KBM-7 (cell line): ENCODE measurements at regions of chr16 and their contacts with region 1.

Region 1: DNA sequence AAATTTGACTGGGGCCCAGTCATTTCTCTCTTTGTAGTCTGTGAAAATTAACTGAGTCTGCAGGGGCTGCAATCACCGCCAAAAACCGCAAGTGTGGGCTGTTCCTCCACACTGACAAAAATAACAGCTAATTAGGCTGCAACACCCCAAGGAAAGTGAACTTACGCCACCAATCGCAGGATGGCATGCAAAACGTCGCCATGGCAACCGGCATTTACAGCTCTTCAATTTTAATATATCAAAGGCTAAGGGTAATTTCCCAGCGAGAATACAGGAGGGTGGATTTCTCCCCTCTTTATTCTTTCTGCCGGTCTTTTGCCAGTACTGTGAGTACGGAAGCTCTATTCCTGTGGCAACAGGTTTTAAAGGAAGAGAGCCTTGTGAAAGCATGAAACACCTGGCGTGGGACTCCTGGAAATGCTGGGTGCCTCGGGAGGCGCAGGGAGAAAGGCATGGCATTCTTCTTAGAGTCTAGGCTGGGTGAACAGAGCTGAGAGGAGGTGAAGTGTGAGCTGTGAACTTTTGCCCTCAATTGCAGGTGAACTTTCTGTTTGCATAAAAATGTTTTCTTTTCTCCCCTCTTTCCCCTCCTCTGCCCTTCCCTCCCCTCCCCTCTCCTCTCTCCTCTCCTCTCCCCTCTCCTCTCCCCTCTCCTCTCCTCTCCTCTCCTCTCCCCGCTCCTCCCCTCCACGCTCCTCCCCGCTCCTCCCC is 399.7 kb downstream of the XYLT1 start:
- DNase-seq: peak; percentile 64

Region 2: GRCh38 chr16:17173281-17173680 is 102.2 kb after region 1 on chr16:
- in situ Hi-C with region 1: loop called (anchors 25 kb)
- DNase-seq: peak; percentile 77

Region 3: GRCh38 chr16:17313085-17313611 is 242.1 kb after region 1 on chr16:
- in situ Hi-C with region 1: no loop called
- DNase-seq: peak; percentile 45